Mammary epithelial cell (primary cell): ENCODE measurements at regions of chr7 and their contacts with region 1.

Region 1: DNA sequence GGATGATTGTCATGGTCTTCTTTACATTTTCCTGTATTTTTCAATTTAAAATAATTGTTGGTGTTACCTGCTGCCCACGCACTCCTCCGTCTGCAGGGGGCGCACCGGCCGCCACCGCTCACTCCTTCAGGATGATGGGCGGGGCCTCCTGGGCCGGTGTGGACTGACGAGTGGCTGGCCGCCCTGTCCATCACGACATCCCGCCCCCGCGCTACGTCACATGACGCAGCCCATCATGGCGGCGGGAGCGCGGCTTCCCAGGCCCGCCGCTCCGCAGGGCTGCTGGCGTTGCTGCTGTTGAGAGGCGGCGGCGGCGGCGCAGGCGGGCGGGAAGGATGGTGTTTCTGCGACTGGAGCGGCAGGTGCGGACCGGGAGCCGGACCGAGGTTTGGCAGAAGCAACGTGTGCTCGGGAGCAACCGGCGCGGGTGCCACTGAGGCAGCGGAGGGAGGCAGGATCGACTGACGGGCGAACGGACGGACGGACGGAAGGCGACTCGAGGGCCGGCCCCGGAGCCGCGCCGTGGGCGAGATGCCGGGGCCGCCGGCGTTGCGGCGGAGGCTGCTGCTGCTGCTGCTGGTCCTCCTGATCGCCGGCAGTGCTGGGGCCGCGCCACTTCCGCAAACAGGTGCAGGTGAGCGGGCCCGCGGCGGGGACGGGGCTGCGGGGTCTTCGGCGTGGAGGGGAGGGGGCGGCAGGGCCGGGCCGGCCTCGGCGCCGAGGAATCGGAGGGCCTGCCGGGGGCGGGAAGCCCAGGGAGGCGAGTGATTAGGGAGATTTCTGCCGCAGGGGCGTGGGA is at the start of gene LMTK2:
- DNase-seq: peak; percentile 82
- H3K4me3 ChIP-seq: peak within 1 kb of the TSS; percentile 91 to 95 (median 94)
- H3K27ac ChIP-seq: peak within 1 kb of the TSS; percentile 59
- H3K4me1 ChIP-seq: peaks cover 12% of the 10 kb centered on the region
- H3K27me3 ChIP-seq: no peaks in the 10 kb centered on the region
- CTCF ChIP-seq: peak; percentile 77 to 94
- total RNA-seq, gene LMTK2: 15.3 to 18.9 TPM

Region 2: GRCh38 chr7:97872025-97872669 is 234.7 kb before region 1 on chr7 and contains the start of gene ASNS:
- CTCF ChIA-PET with region 1: no interaction called
- dilution Hi-C with region 1: no loop called
- in situ Hi-C with region 1: no loop called
- intact Hi-C with region 1: loop called (anchors 5 kb)
- DNase-seq: peak; percentile 93
- H3K4me3 ChIP-seq: peak within 1 kb of the TSS; percentile 81 to 90 (median 81)
- H3K27ac ChIP-seq: peak within 1 kb of the TSS; percentile 48
- H3K4me1 ChIP-seq: peaks cover 7% of the 10 kb centered on the region
- H3K27me3 ChIP-seq: no peaks in the 10 kb centered on the region
- CTCF ChIP-seq: no peak
- total RNA-seq, gene ASNS: 175 to 188 TPM

Region 3: DNA sequence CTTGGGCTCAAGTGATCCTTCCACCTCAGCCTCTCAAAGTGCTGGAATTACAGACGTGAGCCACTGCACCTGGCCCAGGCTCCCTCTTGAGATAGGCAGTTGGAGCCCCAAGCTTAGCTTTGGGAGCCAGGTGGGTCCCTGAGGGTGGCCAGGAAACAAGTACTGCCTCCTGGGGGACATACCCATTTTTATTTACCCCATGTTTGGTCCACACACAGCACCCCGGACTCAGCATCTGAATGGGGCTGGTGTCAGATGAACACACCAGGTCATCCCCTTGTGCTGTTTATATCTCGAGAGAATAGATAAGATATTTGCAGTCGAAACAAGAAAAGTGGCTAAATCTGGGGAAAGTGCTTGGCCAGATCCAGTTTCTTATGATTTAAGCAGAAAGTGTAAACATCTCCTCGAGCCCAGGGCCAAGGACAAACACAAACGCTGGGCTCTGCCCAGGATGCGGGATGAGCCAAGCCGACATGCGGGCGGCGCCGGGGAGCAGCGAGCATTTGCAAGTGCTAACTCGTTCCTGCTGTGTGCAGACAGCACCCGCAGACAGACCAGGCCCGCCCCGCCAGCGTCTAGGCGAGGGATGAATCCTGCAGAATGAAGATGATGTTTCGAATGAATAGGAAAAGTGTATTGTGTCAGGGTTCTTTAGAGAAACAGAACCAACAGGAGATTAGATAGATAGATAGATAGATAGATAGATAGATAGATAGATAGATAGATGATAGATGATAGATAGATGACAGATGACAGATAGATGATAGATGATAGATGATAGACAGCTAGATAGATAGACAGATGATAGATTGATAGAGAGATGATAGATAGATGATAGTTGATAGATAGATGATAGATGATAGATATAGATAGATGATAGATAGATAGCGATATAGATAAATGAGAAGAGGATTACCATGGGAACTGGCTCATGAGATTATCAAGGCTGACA is 72.5 kb before region 1 on chr7:
- CTCF ChIA-PET with region 1: no interaction called
- dilution Hi-C with region 1: loop called (anchors 5 kb)
- in situ Hi-C with region 1: no loop called
- intact Hi-C with region 1: no loop called
- DNase-seq: peak; percentile 65
- H3K4me3 ChIP-seq: no peak overlapping the region
- H3K27ac ChIP-seq: no peak overlapping the region
- H3K4me1 ChIP-seq: peaks cover 6% of the 10 kb centered on the region
- H3K27me3 ChIP-seq: no peaks in the 10 kb centered on the region
- CTCF ChIP-seq: peak in 1 of 2 donors; percentile 1

Region 4: DNA sequence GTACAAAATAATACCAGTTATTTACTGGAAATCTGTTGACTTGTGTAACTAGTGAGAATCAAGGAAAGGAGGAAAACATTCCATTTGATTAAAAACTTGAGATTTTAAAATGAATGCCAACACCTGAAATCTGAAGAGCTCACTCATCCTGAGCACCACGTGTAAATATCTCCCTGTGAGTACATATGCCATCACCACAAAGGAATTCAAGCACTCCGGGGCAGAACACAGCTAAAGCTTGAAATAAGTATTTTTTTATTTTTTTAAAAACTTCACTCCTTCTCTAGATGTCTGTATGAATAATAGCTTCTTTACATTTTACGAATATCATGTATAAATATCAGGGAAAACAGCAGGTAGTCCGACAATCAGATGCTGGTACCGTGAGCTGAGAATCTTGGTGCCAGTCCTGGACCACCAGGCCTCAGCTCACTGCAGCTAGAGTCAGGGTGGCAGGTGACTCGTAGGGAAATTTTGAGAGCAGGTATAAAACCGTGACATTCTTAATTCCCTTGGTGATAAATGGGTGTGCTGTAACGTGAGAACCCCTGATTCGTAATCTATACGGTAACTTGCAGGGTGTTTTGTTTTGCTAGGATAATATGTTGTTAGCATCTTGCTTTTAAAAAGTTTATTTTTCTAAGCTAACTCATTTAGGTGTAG is 12.5 kb after region 1 on chr7:
- CTCF ChIA-PET with region 1: interaction called, 16 read pairs
- dilution Hi-C with region 1: no loop called
- in situ Hi-C with region 1: no loop called
- intact Hi-C with region 1: no loop called
- DNase-seq: peak; percentile 72
- H3K4me3 ChIP-seq: peak overlapping the region in 2 of 3 experiments; percentile 2 to 8
- H3K27ac ChIP-seq: peak overlapping the region; percentile 79
- H3K4me1 ChIP-seq: peaks cover 23% of the 10 kb centered on the region
- H3K27me3 ChIP-seq: no peaks in the 10 kb centered on the region
- CTCF ChIP-seq: no peak

Region 5: DNA sequence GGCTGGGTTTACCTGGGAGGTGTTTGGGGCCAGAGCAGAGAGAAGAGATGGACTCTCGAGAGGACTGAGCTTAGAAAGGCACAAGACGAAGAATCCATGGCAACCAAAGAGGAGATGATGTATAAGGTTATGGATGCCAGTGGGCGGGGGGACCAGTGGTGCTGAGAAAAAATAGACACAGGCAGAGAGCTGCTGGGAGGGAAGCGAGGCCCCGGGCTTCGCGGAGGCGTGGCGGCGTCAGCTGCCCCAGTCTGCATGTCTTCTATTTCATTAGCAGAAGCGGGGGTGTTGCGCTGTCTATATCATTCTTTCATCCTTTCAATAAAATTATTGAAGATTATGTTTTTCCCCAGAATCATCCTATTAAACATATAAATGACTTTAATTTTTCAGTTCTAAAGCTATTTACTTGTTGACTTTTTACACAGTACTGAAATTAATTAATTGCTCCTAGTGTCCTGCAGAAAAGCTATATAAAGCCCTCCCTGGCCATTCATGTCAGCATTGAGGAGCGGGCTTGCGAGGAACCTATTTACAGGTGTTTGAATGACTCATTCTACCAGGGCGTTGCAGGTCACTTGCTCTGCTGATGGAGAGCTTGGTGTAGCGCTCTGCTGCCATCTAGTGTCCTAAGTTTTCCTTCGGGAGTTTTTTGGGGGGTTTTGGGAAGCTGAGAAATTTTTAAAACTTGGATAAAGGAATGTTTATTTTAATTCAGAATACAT is 61.5 kb after region 1 on chr7:
- CTCF ChIA-PET with region 1: interaction called, 10 read pairs
- dilution Hi-C with region 1: no loop called
- in situ Hi-C with region 1: no loop called
- intact Hi-C with region 1: loop called (anchors 1 kb)
- DNase-seq: peak; percentile 64
- H3K4me3 ChIP-seq: no peak overlapping the region
- H3K27ac ChIP-seq: no peak overlapping the region
- H3K4me1 ChIP-seq: peaks cover 19% of the 10 kb centered on the region
- H3K27me3 ChIP-seq: no peaks in the 10 kb centered on the region
- CTCF ChIP-seq: peak; percentile 63 to 84

Region 6: DNA sequence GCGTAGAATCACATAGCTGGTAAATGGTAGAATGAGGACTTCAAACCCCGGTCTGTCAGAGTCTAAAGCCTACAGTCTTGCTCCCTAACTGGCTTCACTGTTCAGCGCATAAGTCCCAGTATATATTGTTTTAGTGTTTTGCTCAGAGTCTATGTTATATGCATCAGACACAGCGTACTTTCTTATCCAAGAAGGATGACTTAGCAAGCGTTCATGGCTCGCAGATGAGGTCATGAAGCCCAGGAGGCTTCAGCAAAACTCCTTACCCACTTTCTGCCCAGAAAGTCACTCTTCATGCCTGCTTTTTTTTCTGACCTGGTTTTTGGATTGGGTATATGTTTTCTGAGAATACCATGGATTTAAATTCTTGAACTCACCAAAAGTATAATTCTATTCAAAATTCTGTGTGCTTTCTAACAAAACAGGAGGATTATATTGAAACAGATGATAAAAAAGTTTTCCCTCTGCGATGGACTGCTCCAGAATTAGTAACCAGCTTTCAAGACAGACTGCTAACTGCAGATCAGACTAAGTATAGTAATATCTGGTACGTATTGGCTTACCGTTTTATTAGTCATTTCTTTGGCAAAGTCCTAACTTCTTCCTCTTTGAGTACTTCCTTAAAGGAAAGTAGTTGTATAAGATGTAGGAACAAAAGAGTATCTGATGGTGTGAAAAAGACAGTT is 79.7 kb after region 1 on chr7:
- CTCF ChIA-PET with region 1: no interaction called
- dilution Hi-C with region 1: no loop called
- in situ Hi-C with region 1: no loop called
- intact Hi-C with region 1: no loop called
- DNase-seq: no peak
- H3K4me3 ChIP-seq: no peak overlapping the region
- H3K27ac ChIP-seq: no peak overlapping the region
- H3K4me1 ChIP-seq: no peaks in the 10 kb centered on the region
- H3K27me3 ChIP-seq: no peaks in the 10 kb centered on the region
- CTCF ChIP-seq: no peak

Region 7: DNA sequence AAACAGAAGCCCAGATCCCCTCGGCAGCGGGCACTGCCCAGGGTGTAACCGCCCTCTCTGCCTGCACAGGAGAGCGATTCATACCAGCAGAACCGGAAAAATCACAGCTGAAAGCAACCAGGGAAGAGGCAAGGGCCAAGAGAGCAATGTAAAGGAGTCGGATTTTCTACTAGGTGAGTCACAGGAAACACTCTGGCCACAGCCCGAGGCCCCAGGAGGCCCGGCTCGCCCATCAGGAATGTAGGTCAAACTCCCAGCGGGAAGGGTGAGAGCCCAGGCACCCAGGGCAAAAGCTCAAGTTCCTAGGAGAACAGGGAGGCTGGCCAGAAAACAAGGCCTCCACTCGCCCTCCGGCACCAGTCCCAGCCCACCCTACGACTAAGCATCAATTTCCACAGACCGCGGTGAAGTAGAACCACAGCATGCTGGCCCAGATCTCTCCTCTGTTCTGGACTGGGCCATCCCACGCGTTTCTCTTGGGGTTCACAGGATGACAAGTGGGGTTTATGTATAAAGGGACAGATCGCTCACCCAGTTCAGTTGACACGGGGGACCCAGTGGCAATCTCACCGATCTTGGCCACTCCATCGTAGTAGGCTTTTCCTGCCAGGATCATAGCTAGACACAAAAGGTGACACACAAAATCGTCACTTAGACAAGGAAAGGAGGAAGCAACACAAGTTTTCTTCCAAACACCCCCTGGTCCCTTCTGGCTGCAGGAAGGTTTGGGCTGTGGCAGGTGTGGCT is 247.8 kb after region 1 on chr7:
- CTCF ChIA-PET with region 1: interaction called, 11 read pairs
- dilution Hi-C with region 1: no loop called
- in situ Hi-C with region 1: no loop called
- intact Hi-C with region 1: no loop called
- DNase-seq: peak; percentile 93
- H3K4me3 ChIP-seq: peak overlapping the region in 2 of 3 experiments; percentile 4 to 22
- H3K27ac ChIP-seq: peak overlapping the region; percentile 88
- H3K4me1 ChIP-seq: peaks cover 31% of the 10 kb centered on the region
- H3K27me3 ChIP-seq: no peaks in the 10 kb centered on the region
- CTCF ChIP-seq: no peak

Region 8: DNA sequence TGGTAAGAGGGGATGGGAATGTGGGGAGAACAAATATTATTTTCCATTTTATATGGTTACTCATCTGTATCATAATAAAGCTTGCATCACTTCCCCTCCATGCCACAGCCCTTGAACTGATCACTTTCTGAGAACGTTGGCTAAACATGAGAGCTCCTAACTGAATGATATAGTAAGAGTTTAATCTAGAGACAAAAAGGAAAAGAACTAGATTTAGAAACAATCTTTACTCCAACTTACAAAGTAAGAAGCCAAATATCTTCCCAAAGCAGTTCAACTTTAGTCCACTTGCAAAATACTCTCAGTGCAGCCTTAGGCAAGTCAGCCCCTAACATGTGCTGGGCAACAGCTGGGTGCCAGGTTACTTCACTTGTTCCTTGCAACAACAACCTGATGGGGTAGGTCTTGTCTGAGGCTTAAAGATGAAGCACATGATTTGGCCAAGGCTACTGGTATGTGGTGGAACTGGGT is 1016.8 kb after region 1 on chr7:
- CTCF ChIA-PET with region 1: no interaction called
- dilution Hi-C with region 1: no loop called
- in situ Hi-C with region 1: no loop called
- intact Hi-C with region 1: no loop called
- DNase-seq: peak; percentile 40
- H3K4me3 ChIP-seq: no peak overlapping the region
- H3K27ac ChIP-seq: peak overlapping the region; percentile 51
- H3K4me1 ChIP-seq: peaks cover 23% of the 10 kb centered on the region
- H3K27me3 ChIP-seq: no peaks in the 10 kb centered on the region
- CTCF ChIP-seq: no peak